Activated CD8-positive, alpha-beta T cell treated with anti-CD3 and anti-CD28 coated beads for 36 hours (primary cell): ENCODE measurements at regions of chr5 and their contacts with region 1.

Region 1: DNA sequence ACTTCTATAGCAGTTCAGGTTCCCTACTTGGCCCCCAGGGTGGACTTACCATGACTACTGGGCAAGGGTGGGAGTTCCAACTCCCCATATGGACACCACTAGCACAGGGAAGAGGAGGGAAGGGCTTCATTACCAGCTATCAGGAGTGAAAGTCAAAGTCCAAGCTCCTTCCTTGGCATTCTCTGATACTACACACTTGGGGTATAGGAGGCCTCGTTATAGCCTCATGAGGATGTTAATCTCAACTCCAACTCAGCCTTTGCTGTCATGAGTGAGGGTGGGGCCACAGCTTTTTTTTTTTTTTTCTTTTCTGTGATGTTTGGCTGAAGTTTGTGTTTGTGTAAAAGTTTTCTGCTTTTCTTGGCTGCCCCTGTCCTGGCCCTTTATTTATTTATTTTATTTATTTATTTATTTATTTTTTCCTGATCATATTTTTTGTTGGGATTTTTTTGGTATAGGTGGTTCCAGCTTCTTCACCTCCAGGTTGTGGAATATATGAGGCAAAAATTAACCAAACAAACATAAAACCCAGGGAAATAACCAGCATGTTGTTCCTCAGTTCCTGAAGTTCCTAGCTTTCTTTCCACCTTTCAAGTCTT is 8.7 kb downstream of the GARIN3 start:
- DNase-seq: no peak
- ATAC-seq: no peak
- H3K4me3 Mint-ChIP-seq: no peak overlapping the region
- H3K27ac Mint-ChIP-seq: peak overlapping the region; percentile 37
- H3K4me1 Mint-ChIP-seq: peaks cover 77% of the 10 kb centered on the region
- H3K27me3 Mint-ChIP-seq: no peaks in the 10 kb centered on the region
- CTCF ChIP-seq: no peak

Region 2: GRCh38 chr5:157180374-157181264 is 23.2 kb after region 1 on chr5 and contains the start of gene ITK:
- CTCF ChIA-PET with region 1: interaction called, 15 read pairs
- POLR2A ChIA-PET with region 1: interaction called, 1,980 read pairs
- intact Hi-C with region 1: no loop called
- DNase-seq: peak; percentile 59
- ATAC-seq: peak; percentile 62
- H3K4me3 Mint-ChIP-seq: peak within 1 kb of the TSS; percentile 99
- H3K27ac Mint-ChIP-seq: peak within 1 kb of the TSS; percentile 100
- H3K4me1 Mint-ChIP-seq: peaks cover 40% of the 10 kb centered on the region
- H3K27me3 Mint-ChIP-seq: no peaks in the 10 kb centered on the region
- CTCF ChIP-seq: no peak
- total RNA-seq, gene ITK: 229 to 236 TPM